ENCODE measurements at regions of chr6 and their contacts with region 1.

Region 1: GRCh38 chr6:143015300-143015706 is 45.4 kb upstream of the AIG1 start:
- DNase-seq: no peak
- ATAC-seq: no peak
- H3K4me3 ChIP-seq: no peak overlapping the region
- H3K27ac ChIP-seq: peak overlapping the region; percentile 98
- H3K4me1 ChIP-seq: peaks cover 26% of the 10 kb centered on the region
- H3K27me3 ChIP-seq: no peaks in the 10 kb centered on the region
- CTCF ChIP-seq: no peak

Region 2: GRCh38 chr6:142692942-142693341 is 322.4 kb before region 1 on chr6:
- CTCF ChIA-PET with region 1: no interaction called
- POLR2A ChIA-PET with region 1: no interaction called
- intact Hi-C with region 1: loop called (anchors 10 kb)
- DNase-seq: peak; percentile 65
- ATAC-seq: peak; percentile 25
- H3K4me3 ChIP-seq: no peak overlapping the region
- H3K27ac ChIP-seq: peak overlapping the region; percentile 42
- H3K4me1 ChIP-seq: peaks cover 32% of the 10 kb centered on the region
- H3K27me3 ChIP-seq: no peaks in the 10 kb centered on the region
- CTCF ChIP-seq: peak; percentile 88

Region 3: GRCh38 chr6:142833054-142833453 is 182.2 kb before region 1 on chr6:
- CTCF ChIA-PET with region 1: no interaction called
- POLR2A ChIA-PET with region 1: no interaction called
- intact Hi-C with region 1: loop called (anchors 5 kb)
- DNase-seq: peak; percentile 93
- ATAC-seq: peak; percentile 90
- H3K4me3 ChIP-seq: no peak overlapping the region; the same call in 1 of the 2 replicates
- H3K27ac ChIP-seq: peak overlapping the region; percentile 91
- H3K4me1 ChIP-seq: peaks cover 23% of the 10 kb centered on the region
- H3K27me3 ChIP-seq: no peaks in the 10 kb centered on the region
- CTCF ChIP-seq: no peak

Region 4: DNA sequence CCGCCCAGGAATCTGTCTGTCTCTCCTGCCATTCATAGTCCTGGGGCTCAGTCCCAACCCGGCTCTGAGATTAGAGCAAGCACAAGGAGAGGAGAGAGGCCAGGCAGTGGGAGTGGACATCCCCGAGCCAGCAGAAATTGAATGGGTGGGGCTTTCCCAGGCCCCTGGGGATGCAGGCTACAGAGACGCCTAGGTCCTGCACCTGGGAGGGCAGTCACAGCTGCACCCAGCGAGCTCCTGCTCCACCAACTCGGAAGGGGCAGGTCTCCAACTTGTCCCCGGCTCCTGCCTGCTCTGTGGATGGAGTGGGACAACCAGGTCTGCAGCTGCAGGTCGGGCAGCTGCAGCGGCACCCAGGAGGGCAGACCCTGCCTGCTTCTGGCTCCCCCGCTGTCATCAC is 34.3 kb after region 1 on chr6:
- CTCF ChIA-PET with region 1: no interaction called
- POLR2A ChIA-PET with region 1: interaction called, 12 read pairs
- intact Hi-C with region 1: no loop called
- DNase-seq: no peak
- ATAC-seq: no peak
- H3K4me3 ChIP-seq: no peak overlapping the region
- H3K27ac ChIP-seq: no peak overlapping the region
- H3K4me1 ChIP-seq: no peaks in the 10 kb centered on the region
- H3K27me3 ChIP-seq: no peaks in the 10 kb centered on the region
- CTCF ChIP-seq: no peak

Region 5: DNA sequence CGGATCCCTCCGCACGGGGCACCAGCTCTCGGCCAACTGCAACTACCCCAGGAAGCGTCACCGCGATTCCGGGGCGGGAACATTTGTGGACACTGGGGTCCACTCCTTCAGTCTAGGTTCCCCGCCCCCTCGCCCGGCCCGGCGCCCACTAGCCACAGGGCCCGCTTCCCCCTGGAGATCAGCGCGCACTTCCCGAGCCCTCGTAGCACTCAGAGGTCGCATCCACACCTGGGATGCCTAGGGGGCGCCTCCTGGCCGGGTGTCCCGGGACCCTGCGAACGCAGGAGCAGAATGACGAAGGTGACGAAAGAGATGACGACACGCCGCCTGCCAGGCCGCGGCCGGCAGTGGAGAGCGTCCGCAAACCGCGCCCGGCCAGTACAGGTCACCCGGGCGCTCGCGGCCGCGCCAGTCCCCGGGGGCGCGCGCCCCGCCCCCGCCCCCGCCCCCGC is 45.1 kb after region 1 on chr6:
- CTCF ChIA-PET with region 1: no interaction called
- POLR2A ChIA-PET with region 1: interaction called, 3 read pairs
- intact Hi-C with region 1: loop called (anchors 1 kb)
- DNase-seq: peak; percentile 67
- ATAC-seq: peak; percentile 73
- H3K4me3 ChIP-seq: peak overlapping the region; percentile 90
- H3K27ac ChIP-seq: peak overlapping the region; percentile 89
- H3K4me1 ChIP-seq: peaks cover 22% of the 10 kb centered on the region
- H3K27me3 ChIP-seq: no peaks in the 10 kb centered on the region
- CTCF ChIP-seq: peak; percentile 20; the same call in 1 of the 2 replicates

Region 6: GRCh38 chr6:143337201-143337949 is 322.1 kb after region 1 on chr6:
- CTCF ChIA-PET with region 1: no interaction called
- POLR2A ChIA-PET with region 1: no interaction called
- intact Hi-C with region 1: loop called (anchors 5 kb)
- DNase-seq: peak; percentile 37
- ATAC-seq: no peak
- H3K4me3 ChIP-seq: no peak overlapping the region
- H3K27ac ChIP-seq: peak overlapping the region; percentile 100
- H3K4me1 ChIP-seq: peaks cover 61% of the 10 kb centered on the region
- H3K27me3 ChIP-seq: no peaks in the 10 kb centered on the region
- CTCF ChIP-seq: peak; percentile 62

Region 7: DNA sequence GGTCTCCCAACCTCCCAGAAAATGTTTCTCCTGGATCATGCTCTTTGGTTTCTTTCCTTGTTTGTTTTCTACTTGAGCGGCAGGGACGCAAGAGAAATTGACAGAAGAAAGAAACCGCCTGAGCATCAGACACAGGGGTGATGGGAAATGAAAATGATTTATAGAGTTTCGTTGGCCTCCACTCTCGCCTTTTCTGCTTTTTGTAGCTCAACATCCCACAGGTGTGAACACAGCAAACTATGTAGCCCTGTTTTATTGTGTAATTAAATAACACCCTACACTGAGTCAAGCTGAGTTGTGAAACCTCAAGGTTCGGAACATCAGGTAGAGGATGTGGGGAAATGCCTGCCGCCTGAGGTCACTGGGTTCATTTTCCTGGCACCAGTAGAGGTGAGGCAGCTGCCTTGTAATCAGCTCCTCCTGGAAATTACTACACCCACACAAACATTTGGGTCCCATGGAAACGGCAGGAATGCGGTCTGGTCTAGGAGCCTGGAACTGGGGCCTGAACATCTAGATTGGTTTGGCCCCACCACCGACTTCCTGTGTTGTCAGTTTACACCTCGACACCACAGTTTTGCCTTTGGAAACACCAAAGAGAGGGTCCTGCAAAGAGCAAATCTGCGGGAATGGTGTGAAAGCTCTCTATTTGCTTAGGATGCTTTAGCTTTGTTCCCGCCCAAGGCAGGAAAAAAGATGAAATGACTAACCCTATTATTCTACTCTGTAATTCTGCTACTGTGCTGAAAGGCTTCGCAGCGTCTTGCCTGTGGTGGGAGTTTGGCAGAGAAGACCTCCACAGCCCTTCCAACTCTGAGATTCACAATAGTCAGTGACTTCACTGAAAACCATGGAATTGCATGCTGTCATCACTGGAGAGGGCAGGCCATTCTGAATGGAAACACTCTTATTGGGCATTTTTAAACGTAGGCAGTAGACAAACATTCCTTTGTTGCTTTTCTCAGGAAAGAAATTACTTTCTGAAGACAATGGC is 382.2 kb after region 1 on chr6:
- CTCF ChIA-PET with region 1: no interaction called
- POLR2A ChIA-PET with region 1: no interaction called
- intact Hi-C with region 1: loop called (anchors 1 kb)
- DNase-seq: peak; percentile 92
- ATAC-seq: peak; percentile 79
- H3K4me3 ChIP-seq: peak overlapping the region; percentile 47
- H3K27ac ChIP-seq: peak overlapping the region; percentile 95
- H3K4me1 ChIP-seq: peaks cover 49% of the 10 kb centered on the region
- H3K27me3 ChIP-seq: no peaks in the 10 kb centered on the region
- CTCF ChIP-seq: no peak

Region 8: GRCh38 chr6:143575440-143575839 is 560.1 kb after region 1 on chr6:
- CTCF ChIA-PET with region 1: no interaction called
- POLR2A ChIA-PET with region 1: no interaction called
- intact Hi-C with region 1: no loop called
- DNase-seq: peak; percentile 76
- ATAC-seq: peak; percentile 62
- H3K4me3 ChIP-seq: no peak overlapping the region
- H3K27ac ChIP-seq: no peak overlapping the region
- H3K4me1 ChIP-seq: peaks cover 9% of the 10 kb centered on the region
- H3K27me3 ChIP-seq: no peaks in the 10 kb centered on the region
- CTCF ChIP-seq: peak; percentile 87